ENCODE measurements at regions of chr15 and their contacts with region 1.

Region 1: DNA sequence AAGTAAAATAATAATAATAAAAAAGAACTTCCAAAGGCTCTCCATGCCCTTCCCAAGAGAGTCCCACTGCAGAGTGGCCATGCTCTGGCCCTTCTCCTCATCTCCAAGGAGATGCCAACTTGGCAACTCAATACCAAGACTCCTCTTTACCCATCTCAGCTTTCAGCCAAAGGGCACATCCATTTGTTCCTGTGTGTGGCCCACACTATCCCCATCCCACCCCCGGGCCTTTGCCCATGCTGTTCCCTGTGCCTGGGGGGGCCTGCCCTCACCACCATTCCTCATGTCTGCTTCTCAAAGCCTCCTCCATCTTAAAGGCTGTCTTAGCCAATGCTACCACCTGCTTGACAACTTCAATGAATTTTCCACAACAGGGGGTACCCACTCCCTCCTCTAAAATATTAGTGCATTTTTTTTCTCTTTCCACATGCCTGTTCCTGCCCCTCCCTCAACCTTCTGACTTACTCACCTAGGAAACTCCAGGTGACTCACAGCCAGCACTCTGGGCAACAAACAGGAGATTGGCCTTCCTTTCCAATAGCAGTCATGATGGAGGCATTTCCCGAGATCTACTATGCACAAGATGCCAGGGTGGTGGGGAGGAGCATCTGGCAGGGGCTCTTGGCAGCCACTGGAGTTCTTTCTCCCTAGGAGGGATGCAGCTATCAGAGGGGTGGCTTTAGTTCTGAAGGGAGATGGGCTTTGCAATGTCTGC is 109.4 kb upstream of the SMAD3 start:
- DNase-seq: no peak
- H3K4me3 ChIP-seq: no peak overlapping the region
- H3K27ac ChIP-seq: no peak overlapping the region
- H3K4me1 ChIP-seq: no peaks in the 10 kb centered on the region
- H3K27me3 ChIP-seq: no peaks in the 10 kb centered on the region
- CTCF ChIP-seq: no peak
- EP300 ChIP-seq: no peak
- POLR2A ChIP-seq: no peak

Region 2: GRCh38 chr15:65675551-65675950 is 1280.5 kb before region 1 on chr15:
- intact Hi-C with region 1: no loop called
- DNase-seq: no peak
- H3K4me3 ChIP-seq: no peak overlapping the region
- H3K27ac ChIP-seq: no peak overlapping the region
- H3K4me1 ChIP-seq: no peaks in the 10 kb centered on the region
- H3K27me3 ChIP-seq: no peaks in the 10 kb centered on the region
- CTCF ChIP-seq: no peak
- EP300 ChIP-seq: no peak
- POLR2A ChIP-seq: no peak

Region 3: GRCh38 chr15:66985653-66986052 is 29.6 kb after region 1 on chr15:
- intact Hi-C with region 1: loop called in 1 of 4 experiments (anchors 1 kb)
- DNase-seq: no peak
- H3K4me3 ChIP-seq: no peak overlapping the region
- H3K27ac ChIP-seq: no peak overlapping the region
- H3K4me1 ChIP-seq: peaks cover 8% of the 10 kb centered on the region
- H3K27me3 ChIP-seq: no peaks in the 10 kb centered on the region
- CTCF ChIP-seq: no peak
- EP300 ChIP-seq: no peak
- POLR2A ChIP-seq: no peak

Region 4: DNA sequence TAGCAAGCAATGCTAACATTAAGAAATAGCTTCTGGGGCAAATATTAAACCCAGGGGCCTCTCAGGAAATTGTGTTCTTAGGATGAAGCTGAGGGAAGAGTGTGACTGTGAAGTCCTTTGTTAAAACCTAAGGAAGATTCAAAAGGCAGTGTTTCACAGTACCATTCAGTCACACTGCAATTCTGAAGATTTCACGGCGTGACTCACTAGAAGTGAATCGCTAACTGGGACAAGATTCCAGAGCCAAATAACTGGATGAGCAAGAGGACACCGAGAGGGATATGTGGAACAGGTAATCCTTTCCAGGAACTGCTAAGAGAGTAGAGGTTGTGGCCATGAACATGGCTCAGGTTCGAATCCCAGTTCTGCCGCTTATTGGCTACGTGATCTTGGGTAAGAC is 47.6 kb after region 1 on chr15:
- intact Hi-C with region 1: loop called in 1 of 4 experiments (anchors 10 kb)
- DNase-seq: no peak
- H3K4me3 ChIP-seq: no peak overlapping the region
- H3K27ac ChIP-seq: no peak overlapping the region
- H3K4me1 ChIP-seq: no peaks in the 10 kb centered on the region
- H3K27me3 ChIP-seq: no peaks in the 10 kb centered on the region
- CTCF ChIP-seq: no peak
- EP300 ChIP-seq: no peak
- POLR2A ChIP-seq: no peak

Region 5: GRCh38 chr15:67340630-67341029 is 384.6 kb after region 1 on chr15:
- intact Hi-C with region 1: no loop called
- DNase-seq: no peak
- H3K4me3 ChIP-seq: no peak overlapping the region
- H3K27ac ChIP-seq: no peak overlapping the region
- H3K4me1 ChIP-seq: no peaks in the 10 kb centered on the region
- H3K27me3 ChIP-seq: no peaks in the 10 kb centered on the region
- CTCF ChIP-seq: no peak
- EP300 ChIP-seq: no peak
- POLR2A ChIP-seq: no peak